Activated CD4-positive, alpha-beta T cell treated with anti-CD3 and anti-CD28 coated beads, Interleukin-2, amount 10 ng/mL, durations not matched to agents 7 days and 5 days (primary cell): ENCODE measurements at regions of chr16 and their contacts with region 1.

Region 1: DNA sequence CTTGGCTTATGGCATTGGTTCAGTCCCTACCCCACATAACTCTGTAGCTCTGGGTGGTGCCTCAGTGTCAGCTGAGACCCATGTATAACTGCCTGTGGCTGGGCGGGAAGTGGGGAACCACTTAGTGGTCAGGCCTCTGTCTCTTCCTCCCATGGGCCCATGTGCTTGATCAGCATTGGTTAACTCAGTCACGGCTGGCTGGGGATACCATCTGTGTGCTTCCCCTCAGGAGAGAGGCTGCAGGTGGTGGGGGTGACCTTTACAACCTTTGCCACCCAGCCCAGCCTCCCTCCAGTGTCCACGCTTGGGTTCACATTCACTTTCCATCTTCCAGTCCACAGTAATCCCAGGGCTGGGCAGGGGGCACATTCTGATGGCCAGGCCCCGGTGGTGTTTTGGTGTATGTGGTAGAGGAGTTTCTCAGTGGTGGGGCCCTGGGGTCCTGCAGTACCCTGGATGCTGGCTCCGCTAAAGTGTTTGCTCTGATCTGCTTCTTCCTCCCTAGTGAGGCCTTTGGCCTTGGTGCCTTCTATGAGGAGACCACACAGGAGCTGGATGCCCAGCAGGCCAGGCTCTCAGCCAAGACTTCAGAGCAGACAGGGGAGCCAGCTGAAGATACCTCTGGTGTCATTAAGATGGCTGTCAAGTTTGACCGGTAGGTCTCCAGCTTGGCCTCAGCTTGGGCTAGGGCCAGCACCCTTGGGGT is 10.2 kb upstream of the NFATC3 start:
- DNase-seq: peak; percentile 89
- H3K4me3 Mint-ChIP-seq: peak overlapping the region; percentile 33
- H3K27ac Mint-ChIP-seq: peak overlapping the region; percentile 88
- H3K4me1 Mint-ChIP-seq: peaks cover 87% of the 10 kb centered on the region
- H3K27me3 Mint-ChIP-seq: no peaks in the 10 kb centered on the region

Region 2: GRCh38 chr16:67877064-67877463 is 197.9 kb before region 1 on chr16:
- CTCF ChIA-PET with region 1: no interaction called
- POLR2A ChIA-PET with region 1: no interaction called
- DNase-seq: no peak
- H3K4me3 Mint-ChIP-seq: no peak overlapping the region
- H3K27ac Mint-ChIP-seq: no peak overlapping the region
- H3K4me1 Mint-ChIP-seq: peaks cover 29% of the 10 kb centered on the region
- H3K27me3 Mint-ChIP-seq: no peaks in the 10 kb centered on the region

Region 3: DNA sequence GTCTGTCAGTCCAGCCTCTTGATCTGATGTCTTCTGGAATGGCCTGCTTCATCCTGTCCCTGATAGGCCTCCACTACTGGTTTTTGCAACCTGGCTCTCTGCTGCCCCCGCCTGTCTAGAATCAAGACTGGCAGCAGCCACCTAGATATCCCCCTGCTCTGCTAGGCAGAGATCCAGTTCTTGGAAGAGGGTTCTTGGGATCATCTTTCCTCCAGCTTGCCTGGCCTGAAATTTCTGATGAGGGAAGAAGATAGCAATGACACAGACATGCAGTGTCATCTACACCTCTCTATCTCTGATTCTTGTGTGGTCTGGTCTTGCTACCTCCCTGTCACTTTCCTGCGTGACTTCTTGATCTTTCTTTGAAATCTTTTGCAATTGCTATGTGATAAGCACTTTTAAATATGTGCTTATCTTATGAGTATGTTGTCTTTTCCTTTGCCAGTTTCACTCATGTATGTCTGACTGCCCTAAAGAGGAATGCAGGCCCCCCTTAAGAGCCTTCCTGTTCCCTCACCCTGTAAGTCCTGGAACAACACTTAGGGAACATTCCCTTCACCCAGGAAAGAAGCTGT is 10.1 kb before region 1 on chr16:
- CTCF ChIA-PET with region 1: interaction called, 45 read pairs
- POLR2A ChIA-PET with region 1: no interaction called
- DNase-seq: peak; percentile 81
- H3K4me3 Mint-ChIP-seq: no peak overlapping the region
- H3K27ac Mint-ChIP-seq: peak overlapping the region; percentile 89
- H3K4me1 Mint-ChIP-seq: peaks cover 84% of the 10 kb centered on the region
- H3K27me3 Mint-ChIP-seq: no peaks in the 10 kb centered on the region

Region 4: GRCh38 chr16:68085259-68086071 is 10.5 kb after region 1 on chr16 and contains the start of gene NFATC3:
- CTCF ChIA-PET with region 1: interaction called, 33 read pairs
- POLR2A ChIA-PET with region 1: interaction called, 9 read pairs
- DNase-seq: peak; percentile 98
- H3K4me3 Mint-ChIP-seq: peak within 1 kb of the TSS; percentile 94
- H3K27ac Mint-ChIP-seq: peak within 1 kb of the TSS; percentile 96
- H3K4me1 Mint-ChIP-seq: peaks cover 64% of the 10 kb centered on the region
- H3K27me3 Mint-ChIP-seq: no peaks in the 10 kb centered on the region
- total RNA-seq, gene NFATC3: 146 to 159 TPM

Region 5: GRCh38 chr16:68093816-68094613 is 19.0 kb after region 1 on chr16:
- CTCF ChIA-PET with region 1: interaction called, 13 read pairs
- POLR2A ChIA-PET with region 1: interaction called, 3 read pairs
- DNase-seq: no peak
- H3K4me3 Mint-ChIP-seq: no peak overlapping the region
- H3K27ac Mint-ChIP-seq: peak overlapping the region; percentile 0
- H3K4me1 Mint-ChIP-seq: peaks cover 72% of the 10 kb centered on the region
- H3K27me3 Mint-ChIP-seq: no peaks in the 10 kb centered on the region